ENCODE measurements at regions of chr12 and their contacts with region 1.

Region 1: DNA sequence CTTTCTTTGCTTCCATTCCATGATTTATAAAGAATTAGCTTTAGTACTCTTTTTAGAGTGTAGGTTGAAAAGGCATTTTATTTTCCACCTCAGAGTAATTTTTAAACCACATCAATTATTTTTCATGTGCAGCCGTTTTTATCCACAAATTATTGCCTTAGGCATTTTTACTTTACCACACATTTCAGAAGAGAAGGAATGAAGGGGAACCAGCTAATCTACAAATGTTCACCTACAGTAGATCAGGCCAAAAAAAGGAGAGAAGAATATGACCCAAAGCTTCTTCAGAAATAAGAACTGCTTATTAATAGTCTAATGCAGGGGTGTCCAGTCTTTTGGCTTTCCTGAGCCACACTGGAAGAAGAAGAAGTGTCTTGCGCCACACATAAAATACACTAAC is 19.8 kb upstream of the NTN4 start:
- DNase-seq: no peak
- H3K4me3 ChIP-seq: no peak overlapping the region
- H3K27ac ChIP-seq: no peak overlapping the region
- H3K4me1 ChIP-seq: no peaks in the 10 kb centered on the region
- H3K27me3 ChIP-seq: no peaks in the 10 kb centered on the region
- CTCF ChIP-seq: no peak
- EP300 ChIP-seq: no peak
- POLR2A ChIP-seq: no peak

Region 2: GRCh38 chr12:95623585-95624042 is 186.8 kb before region 1 on chr12:
- intact Hi-C with region 1: loop called in 2 of 4 experiments (anchors 5 to 10 kb)
- DNase-seq: peak; percentile 62 to 81 (median 74)
- H3K4me3 ChIP-seq: no peak overlapping the region
- H3K27ac ChIP-seq: no peak overlapping the region
- H3K4me1 ChIP-seq: peaks cover 1% of the 10 kb centered on the region
- H3K27me3 ChIP-seq: no peaks in the 10 kb centered on the region
- CTCF ChIP-seq: peak; percentile 22 to 58 (median 41)
- EP300 ChIP-seq: no peak
- POLR2A ChIP-seq: no peak

Region 3: GRCh38 chr12:95755261-95755865 is 55.0 kb before region 1 on chr12:
- intact Hi-C with region 1: no loop called
- DNase-seq: no peak
- H3K4me3 ChIP-seq: no peak overlapping the region
- H3K27ac ChIP-seq: peak overlapping the region in 1 of 2 donors; percentile 40
- H3K4me1 ChIP-seq: peaks cover 4% of the 10 kb centered on the region
- H3K27me3 ChIP-seq: no peaks in the 10 kb centered on the region
- CTCF ChIP-seq: no peak
- EP300 ChIP-seq: no peak
- POLR2A ChIP-seq: no peak

Region 4: GRCh38 chr12:95836185-95836609 is 25.8 kb after region 1 on chr12:
- intact Hi-C with region 1: no loop called
- DNase-seq: no peak
- H3K4me3 ChIP-seq: no peak overlapping the region
- H3K27ac ChIP-seq: no peak overlapping the region
- H3K4me1 ChIP-seq: no peaks in the 10 kb centered on the region
- H3K27me3 ChIP-seq: no peaks in the 10 kb centered on the region
- CTCF ChIP-seq: no peak
- EP300 ChIP-seq: no peak
- POLR2A ChIP-seq: no peak

Region 5: DNA sequence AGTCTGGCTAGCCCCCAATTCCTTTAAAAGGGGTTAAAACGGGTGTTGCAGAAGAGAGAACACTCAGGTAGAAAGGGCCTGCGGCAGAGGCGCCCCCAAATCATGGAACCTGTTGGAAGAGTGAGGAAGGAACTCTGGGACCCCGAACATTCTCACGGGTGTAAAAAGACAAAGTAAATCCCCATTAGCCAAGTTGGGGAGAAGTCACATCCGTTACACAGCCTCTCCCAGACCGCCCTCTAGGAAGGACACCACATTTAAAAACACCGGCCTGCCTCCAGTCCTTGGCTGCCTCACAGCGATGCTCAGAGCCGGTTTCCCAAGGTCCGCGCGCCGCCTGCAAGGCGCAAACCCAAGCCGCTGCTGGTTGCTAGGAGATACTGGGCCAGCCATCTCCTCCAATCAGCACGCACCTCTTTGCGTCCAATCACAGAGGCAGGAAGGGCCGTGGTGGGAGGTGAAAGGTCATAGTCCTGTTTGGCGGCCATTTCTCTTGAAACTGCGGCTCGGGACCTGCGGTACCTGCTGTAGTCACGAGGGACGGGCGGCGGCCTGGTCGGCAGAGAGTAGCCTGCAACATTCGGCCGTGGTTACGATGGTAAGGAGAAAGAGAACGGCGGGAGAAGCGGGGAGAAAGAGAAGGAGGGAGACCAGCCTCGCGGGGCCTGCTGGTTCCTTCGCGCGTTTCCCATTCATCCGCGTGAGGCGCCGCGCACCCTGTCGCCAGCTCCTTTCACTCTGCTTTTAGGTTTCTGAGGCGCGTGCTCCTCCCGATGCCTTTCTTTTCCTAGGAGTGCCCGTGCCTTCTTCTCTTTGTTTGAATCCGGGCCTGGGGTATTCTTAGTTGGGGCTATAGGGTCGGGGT is 48.3 kb after region 1 on chr12 and contains the start of gene SNRPF:
- intact Hi-C with region 1: no loop called
- DNase-seq: peak; percentile 94 to 97 (median 96)
- H3K4me3 ChIP-seq: peak within 1 kb of the TSS; percentile 85
- H3K27ac ChIP-seq: peak within 1 kb of the TSS in 1 of 2 donors; percentile 57
- H3K4me1 ChIP-seq: peaks cover 10% of the 10 kb centered on the region
- H3K27me3 ChIP-seq: no peaks in the 10 kb centered on the region
- CTCF ChIP-seq: peak in 1 of 3 donors; percentile 40
- EP300 ChIP-seq: no peak
- POLR2A ChIP-seq: peak; percentile 36
- total RNA-seq, gene SNRPF: 8.5 to 25.5 (median 17.1) TPM

Region 6: GRCh38 chr12:95918194-95918993 is 108.0 kb after region 1 on chr12:
- intact Hi-C with region 1: no loop called
- DNase-seq: peak in 1 of 5 donors; percentile 20
- H3K4me3 ChIP-seq: no peak overlapping the region
- H3K27ac ChIP-seq: no peak overlapping the region
- H3K4me1 ChIP-seq: no peaks in the 10 kb centered on the region
- H3K27me3 ChIP-seq: no peaks in the 10 kb centered on the region
- CTCF ChIP-seq: peak in 1 of 3 donors; percentile 19
- EP300 ChIP-seq: no peak
- POLR2A ChIP-seq: no peak